ENCODE measurements at regions of chr2 and their contacts with region 1.

Region 1: GRCh38 chr2:46364797-46365457 is 67.7 kb downstream of the EPAS1 start:
- DNase-seq: peak; percentile 80
- H3K4me3 ChIP-seq: no peak overlapping the region; a peak in 1 of 4 replicates
- H3K27ac ChIP-seq: peak overlapping the region; percentile 75 to 98; a peak in 3 of 4 replicates
- H3K4me1 ChIP-seq: peaks cover 14 to 76% of the 10 kb centered on the region in 2 experiments; a peak in 3 of 4 replicates
- H3K27me3 ChIP-seq: no peaks in the 10 kb centered on the region
- CTCF ChIP-seq: peak; percentile 98
- EP300 ChIP-seq: peak in 1 of 2 experiments; percentile 74; a peak in 2 of 4 replicates
- RAD21 ChIP-seq: peak; percentile 94

Region 2: DNA sequence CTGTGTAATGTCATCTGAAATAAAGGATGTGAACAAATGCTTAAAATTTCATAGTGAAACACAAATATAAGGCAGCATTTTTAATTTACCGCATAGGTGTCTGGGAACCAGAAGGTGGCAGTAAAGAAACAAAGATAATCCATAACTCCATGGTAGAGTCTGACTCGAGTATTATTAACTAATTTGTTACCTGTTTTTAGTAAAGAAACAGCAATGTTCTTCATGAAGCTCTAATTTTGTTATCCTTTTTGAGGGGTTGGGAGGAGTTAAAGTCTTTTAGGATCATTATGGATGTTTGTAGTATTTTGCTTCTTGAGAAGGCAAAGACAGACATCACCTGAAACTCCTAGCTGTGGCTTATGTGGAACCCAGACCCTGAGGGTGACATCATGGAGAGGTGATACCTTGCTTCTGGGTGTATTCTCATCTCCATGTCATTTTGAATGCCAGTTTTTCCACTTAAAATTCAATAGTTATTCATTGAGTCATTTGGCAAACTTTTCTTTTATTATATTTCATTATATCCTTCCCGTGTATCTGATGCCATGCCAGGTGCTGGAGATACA is 353.9 kb before region 1 on chr2:
- CTCF ChIA-PET with region 1: interaction called, 20 read pairs
- POLR2A ChIA-PET with region 1: no interaction called
- DNase-seq: peak; percentile 72
- H3K4me3 ChIP-seq: no peak overlapping the region
- H3K27ac ChIP-seq: peak overlapping the region in 1 of 2 experiments; percentile 28; a peak in 2 of 4 replicates
- H3K4me1 ChIP-seq: peaks cover 8 to 23% of the 10 kb centered on the region in 2 experiments; a peak in 3 of 4 replicates
- H3K27me3 ChIP-seq: no peaks in the 10 kb centered on the region
- CTCF ChIP-seq: peak; percentile 92
- EP300 ChIP-seq: no peak
- RAD21 ChIP-seq: peak; percentile 93

Region 3: DNA sequence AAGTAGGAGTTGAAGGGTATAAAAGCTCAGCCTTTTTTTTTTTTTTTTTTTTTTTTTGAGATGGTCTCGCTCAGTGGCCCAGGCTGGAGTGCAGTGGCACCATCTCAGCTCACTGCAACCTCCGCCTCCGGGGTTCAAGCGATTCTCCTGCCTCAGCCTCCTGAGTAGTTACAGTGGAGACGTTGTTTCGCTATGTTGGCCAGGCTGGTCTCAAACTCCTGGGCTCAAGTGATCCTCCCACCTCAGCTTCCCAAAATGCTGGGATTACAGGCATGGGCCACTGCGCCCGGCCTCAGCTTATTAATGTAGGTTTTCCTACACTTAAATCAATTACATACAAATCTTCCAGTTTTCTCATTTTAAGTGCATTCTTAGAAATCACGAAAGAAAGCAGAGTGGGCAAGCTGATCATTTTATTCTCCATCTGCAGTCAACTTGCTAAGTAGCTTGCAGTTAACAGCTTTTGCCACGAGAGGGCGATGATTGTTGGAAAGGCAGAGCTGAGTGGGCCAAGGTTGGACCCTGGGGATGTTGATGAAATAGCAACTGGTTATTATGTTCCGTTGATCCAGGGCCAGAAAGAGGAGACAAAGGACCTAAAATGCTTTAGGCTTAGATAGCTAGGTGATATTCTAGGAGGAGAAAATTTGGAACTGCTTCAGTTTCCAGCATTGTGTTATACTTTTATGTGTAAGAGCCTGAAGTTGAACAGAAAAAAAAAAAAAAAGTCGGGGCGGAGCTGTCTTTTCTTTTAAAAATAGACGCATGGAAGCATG is 302.1 kb before region 1 on chr2:
- CTCF ChIA-PET with region 1: interaction called, 34 read pairs
- POLR2A ChIA-PET with region 1: interaction called, 11 read pairs
- DNase-seq: peak; percentile 82
- H3K4me3 ChIP-seq: no peak overlapping the region; a peak in 1 of 4 replicates
- H3K27ac ChIP-seq: no peak overlapping the region
- H3K4me1 ChIP-seq: peaks cover 14 to 25% of the 10 kb centered on the region in 2 experiments
- H3K27me3 ChIP-seq: no peaks in the 10 kb centered on the region
- CTCF ChIP-seq: peak; percentile 99
- EP300 ChIP-seq: no peak
- RAD21 ChIP-seq: peak; percentile 97

Region 4: GRCh38 chr2:46073540-46074018 is 291.3 kb before region 1 on chr2:
- CTCF ChIA-PET with region 1: no interaction called
- POLR2A ChIA-PET with region 1: no interaction called
- DNase-seq: peak; percentile 74
- H3K4me3 ChIP-seq: peak overlapping the region; percentile 37 to 56; a peak in 3 of 4 replicates
- H3K27ac ChIP-seq: peak overlapping the region; percentile 93 to 94
- H3K4me1 ChIP-seq: peaks cover 34 to 39% of the 10 kb centered on the region in 2 experiments
- H3K27me3 ChIP-seq: no peaks in the 10 kb centered on the region
- CTCF ChIP-seq: no peak
- EP300 ChIP-seq: peak; percentile 89 to 100
- RAD21 ChIP-seq: no peak; the same call in 1 of the 2 replicates

Region 5: GRCh38 chr2:46296840-46297545 is 67.9 kb before region 1 on chr2 and contains the start of gene EPAS1:
- CTCF ChIA-PET with region 1: interaction called, 42 read pairs
- POLR2A ChIA-PET with region 1: interaction called, 12 read pairs
- DNase-seq: peak; percentile 100
- H3K4me3 ChIP-seq: peak within 1 kb of the TSS; percentile 96 to 98
- H3K27ac ChIP-seq: peak within 1 kb of the TSS; percentile 71 to 96
- H3K4me1 ChIP-seq: peaks cover 7 to 25% of the 10 kb centered on the region in 2 experiments; a peak in 2 of 4 replicates
- H3K27me3 ChIP-seq: no peaks in the 10 kb centered on the region
- CTCF ChIP-seq: no peak
- EP300 ChIP-seq: no peak
- RAD21 ChIP-seq: no peak
- polyA plus RNA-seq, gene EPAS1: 69.2 and 92.2 TPM in 2 replicates

Region 6: DNA sequence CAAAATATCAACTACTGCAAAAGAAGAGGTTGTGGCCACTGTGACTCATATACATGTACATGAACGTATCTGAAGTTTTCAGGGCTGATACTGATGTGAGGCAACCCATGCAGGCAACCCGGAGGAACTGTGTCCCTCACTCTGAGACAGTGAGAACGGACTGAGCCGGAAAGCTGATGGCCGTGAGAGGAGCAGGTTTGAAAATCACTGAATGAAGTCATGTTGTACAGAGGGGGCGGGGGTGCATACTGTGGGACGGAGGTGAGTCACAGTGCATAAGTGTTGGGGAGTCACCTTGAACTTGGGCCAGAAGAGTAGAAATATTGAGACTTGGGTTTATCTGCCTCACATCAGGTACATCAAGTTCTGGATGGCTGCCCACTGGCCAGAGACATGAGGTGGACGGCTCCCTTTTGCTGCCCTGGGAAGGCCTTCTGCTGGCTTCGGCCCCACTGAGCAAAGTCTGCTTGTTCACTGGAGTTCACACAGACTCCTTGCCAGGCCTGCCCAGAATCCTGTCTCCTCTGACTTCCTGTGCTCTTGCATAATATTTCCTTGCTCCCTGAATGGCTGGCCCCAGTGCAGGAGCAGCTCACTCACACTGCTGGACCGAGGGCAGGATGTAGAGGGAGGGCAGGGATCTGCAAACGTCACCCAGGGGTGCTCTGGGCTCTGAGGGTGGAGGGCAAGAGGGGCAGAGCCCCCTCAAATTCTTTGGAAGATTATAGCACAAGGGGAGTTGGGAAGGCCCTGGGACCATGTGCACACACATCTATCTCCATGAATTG is 49.6 kb before region 1 on chr2:
- CTCF ChIA-PET with region 1: interaction called, 18 read pairs
- POLR2A ChIA-PET with region 1: no interaction called
- DNase-seq: peak; percentile 50
- H3K4me3 ChIP-seq: peak overlapping the region in 1 of 2 experiments; percentile 25; a peak in 2 of 4 replicates
- H3K27ac ChIP-seq: peak overlapping the region; percentile 92 to 98
- H3K4me1 ChIP-seq: peaks cover 46 to 69% of the 10 kb centered on the region in 2 experiments
- H3K27me3 ChIP-seq: no peaks in the 10 kb centered on the region
- CTCF ChIP-seq: no peak
- EP300 ChIP-seq: peak; percentile 12 to 96; a peak in 3 of 4 replicates
- RAD21 ChIP-seq: no peak

Region 7: GRCh38 chr2:46335391-46336282 is 29.3 kb before region 1 on chr2:
- CTCF ChIA-PET with region 1: interaction called, 194 read pairs
- POLR2A ChIA-PET with region 1: interaction called, 8 read pairs
- DNase-seq: no peak
- H3K4me3 ChIP-seq: peak overlapping the region; percentile 21 to 50
- H3K27ac ChIP-seq: peak overlapping the region; percentile 100
- H3K4me1 ChIP-seq: peaks cover 86 to 97% of the 10 kb centered on the region in 2 experiments
- H3K27me3 ChIP-seq: no peaks in the 10 kb centered on the region
- CTCF ChIP-seq: no peak
- EP300 ChIP-seq: 0 out of 4 replicates have a peak, but pooled peaks of 1 of the 2 experiments have one; percentile 29
- RAD21 ChIP-seq: no peak

Region 8: DNA sequence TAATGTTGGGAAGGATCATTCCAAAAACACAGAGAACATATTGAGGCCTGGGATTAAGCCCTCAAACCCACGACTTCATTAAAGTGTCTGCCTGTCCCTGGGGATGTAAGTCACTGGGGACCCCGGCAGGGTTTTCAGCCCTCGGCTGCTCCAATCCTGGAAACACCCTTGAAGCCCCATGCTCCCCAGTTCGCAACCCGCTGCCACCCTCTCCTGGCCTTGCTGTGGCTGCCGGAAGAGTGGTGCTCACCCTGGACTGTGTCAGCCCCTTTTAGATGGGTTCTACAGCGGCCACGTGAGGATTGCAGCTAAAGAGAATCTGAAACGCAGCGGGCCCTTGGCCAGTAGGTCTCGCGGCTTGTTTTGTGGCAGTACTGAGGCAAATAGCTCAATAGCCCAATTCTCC is 12.3 kb after region 1 on chr2:
- CTCF ChIA-PET with region 1: interaction called, 20 read pairs
- POLR2A ChIA-PET with region 1: interaction called, 3 read pairs
- DNase-seq: peak; percentile 47
- H3K4me3 ChIP-seq: no peak overlapping the region
- H3K27ac ChIP-seq: peak overlapping the region in 1 of 2 experiments; percentile 98; a peak in 1 of 4 replicates
- H3K4me1 ChIP-seq: peaks cover 0 to 54% of the 10 kb centered on the region in 2 experiments; a peak in 2 of 4 replicates
- H3K27me3 ChIP-seq: no peaks in the 10 kb centered on the region
- CTCF ChIP-seq: peak; percentile 13; the same call in 1 of the 2 replicates
- EP300 ChIP-seq: no peak
- RAD21 ChIP-seq: peak; percentile 43

Region 9: GRCh38 chr2:46555011-46555410 is 190.1 kb after region 1 on chr2:
- CTCF ChIA-PET with region 1: no interaction called
- POLR2A ChIA-PET with region 1: no interaction called
- DNase-seq: peak; percentile 28
- H3K4me3 ChIP-seq: no peak overlapping the region
- H3K27ac ChIP-seq: no peak overlapping the region
- H3K4me1 ChIP-seq: peaks cover 0 to 21% of the 10 kb centered on the region in 2 experiments; a peak in 1 of 4 replicates
- H3K27me3 ChIP-seq: no peaks in the 10 kb centered on the region
- CTCF ChIP-seq: peak; percentile 59
- EP300 ChIP-seq: no peak
- RAD21 ChIP-seq: peak; percentile 28; the same call in 1 of the 2 replicates